WTC11 (cell line): ENCODE measurements at regions of chr10 and their contacts with region 1.

Region 1: GRCh38 chr10:118720685-118721538 is 33.9 kb downstream of the CACUL1 start:
- DNase-seq: peak; percentile 47
- ATAC-seq: peak; percentile 32; the same call in 1 of the 2 replicates
- H3K4me3 Mint-ChIP-seq: no peak overlapping the region
- H3K27ac Mint-ChIP-seq: no peak overlapping the region
- H3K4me1 Mint-ChIP-seq: no peaks in the 10 kb centered on the region
- H3K27me3 Mint-ChIP-seq: no peaks in the 10 kb centered on the region
- CTCF ChIP-seq: peak; percentile 71

Region 2: DNA sequence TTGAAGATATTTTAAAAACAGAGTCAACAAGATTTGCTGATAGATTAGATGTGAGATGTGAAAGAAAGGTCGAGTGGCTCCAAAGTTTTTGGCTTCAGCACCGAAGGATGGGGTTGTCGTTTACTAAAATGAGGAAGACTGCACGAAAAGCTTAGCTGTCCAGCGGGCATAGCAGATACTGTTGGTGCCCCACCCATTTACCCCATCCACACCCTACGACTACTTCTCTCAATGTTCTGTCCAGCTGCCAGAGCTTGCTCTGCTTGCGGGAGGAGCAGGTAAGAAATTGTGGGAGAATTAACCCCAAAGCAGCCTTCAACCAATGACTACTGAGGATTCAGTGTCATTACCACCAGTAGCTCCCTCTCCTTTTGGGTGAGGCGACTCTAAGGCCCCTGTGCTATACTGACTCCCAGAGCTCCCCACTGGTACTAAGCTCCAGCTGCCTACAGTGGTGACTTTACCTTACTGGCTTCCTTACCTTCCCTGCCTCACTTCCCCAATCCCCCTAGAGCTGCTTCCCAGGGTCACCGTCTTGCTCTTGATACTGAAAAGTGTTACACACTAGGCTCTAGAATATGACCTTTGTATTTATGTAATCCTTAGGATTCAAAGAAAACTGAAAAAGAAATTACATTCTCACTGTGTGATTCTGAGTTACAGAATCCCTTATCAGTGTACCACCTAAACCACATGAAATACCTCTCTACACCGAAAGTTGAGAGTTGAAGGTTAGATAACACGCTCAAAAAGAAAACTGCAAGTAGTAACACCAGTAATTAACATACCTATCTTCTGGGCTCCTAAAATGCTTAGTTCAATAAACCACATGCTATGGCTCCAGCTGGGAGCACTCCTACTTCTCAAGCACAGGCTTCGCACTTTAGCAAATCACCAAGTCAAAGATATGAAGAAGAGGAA is 11.6 kb after region 1 on chr10:
- CTCF ChIA-PET with region 1: interaction called, 28 read pairs
- POLR2A ChIA-PET with region 1: no interaction called
- DNase-seq: no peak
- ATAC-seq: peak; percentile 80
- H3K4me3 Mint-ChIP-seq: no peak overlapping the region
- H3K27ac Mint-ChIP-seq: peak overlapping the region; percentile 82
- H3K4me1 Mint-ChIP-seq: peaks cover 53% of the 10 kb centered on the region
- H3K27me3 Mint-ChIP-seq: no peaks in the 10 kb centered on the region
- CTCF ChIP-seq: no peak

Region 3: GRCh38 chr10:118754720-118755480 is 34.0 kb after region 1 on chr10 and contains the start of gene CACUL1:
- CTCF ChIA-PET with region 1: interaction called, 14 read pairs
- POLR2A ChIA-PET with region 1: no interaction called
- DNase-seq: peak; percentile 100
- ATAC-seq: peak; percentile 98
- H3K4me3 Mint-ChIP-seq: peak within 1 kb of the TSS; percentile 93
- H3K27ac Mint-ChIP-seq: peak within 1 kb of the TSS; percentile 97
- H3K4me1 Mint-ChIP-seq: peaks cover 20% of the 10 kb centered on the region
- H3K27me3 Mint-ChIP-seq: peaks cover 17% of the 10 kb centered on the region
- CTCF ChIP-seq: no peak
- total RNA-seq, gene CACUL1: 37.1 to 41.5 TPM (median 38.4 TPM) in 3 replicates

Region 4: DNA sequence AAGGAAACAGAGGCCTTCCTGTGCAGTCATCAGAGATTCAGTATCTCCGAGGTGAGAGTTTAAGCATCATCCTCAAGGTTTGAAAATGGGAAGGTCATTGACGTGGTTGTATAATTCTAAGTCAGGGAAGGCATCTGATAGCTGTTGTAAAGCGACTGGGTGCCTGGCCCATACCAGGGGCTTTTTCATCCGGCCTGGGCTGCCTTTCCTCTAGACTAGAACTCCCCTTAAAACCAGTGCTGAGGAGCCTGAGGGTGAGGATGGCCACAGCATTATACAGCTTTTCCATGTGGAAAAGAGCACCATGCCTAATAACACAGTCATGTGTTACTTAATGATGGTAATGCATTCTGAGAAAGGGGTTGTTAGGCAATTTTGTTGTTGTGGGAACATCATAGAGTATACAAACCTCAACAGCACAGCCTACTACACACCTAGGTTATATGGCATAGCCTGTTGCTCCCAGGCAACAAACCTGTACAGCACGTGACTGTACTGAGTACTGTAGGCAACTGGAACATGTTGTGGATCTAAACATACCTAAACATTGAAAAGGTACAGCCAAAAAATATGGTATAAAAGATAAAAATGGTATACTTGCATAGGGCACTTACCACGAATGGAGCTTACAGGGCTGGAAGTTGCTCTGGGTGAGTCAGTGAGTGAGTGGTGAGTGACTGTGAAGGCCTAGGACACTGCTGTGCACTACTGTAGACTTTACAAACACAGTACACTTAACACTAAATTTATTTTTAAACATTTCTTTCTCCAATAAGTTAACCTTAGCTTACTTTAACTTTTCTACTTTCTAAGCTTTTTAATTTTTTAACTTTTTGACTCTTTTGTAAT is 47.4 kb after region 1 on chr10:
- CTCF ChIA-PET with region 1: no interaction called
- POLR2A ChIA-PET with region 1: no interaction called
- DNase-seq: no peak
- ATAC-seq: no peak
- H3K4me3 Mint-ChIP-seq: no peak overlapping the region
- H3K27ac Mint-ChIP-seq: no peak overlapping the region
- H3K4me1 Mint-ChIP-seq: peaks cover 6% of the 10 kb centered on the region; the same call in 1 of the 2 replicates
- H3K27me3 Mint-ChIP-seq: peaks cover 4% of the 10 kb centered on the region; the same call in 1 of the 2 replicates
- CTCF ChIP-seq: no peak